Transverse colon (tissue), 4 donors: ENCODE measurements at regions of chr15 and their contacts with region 1.

Region 1: DNA sequence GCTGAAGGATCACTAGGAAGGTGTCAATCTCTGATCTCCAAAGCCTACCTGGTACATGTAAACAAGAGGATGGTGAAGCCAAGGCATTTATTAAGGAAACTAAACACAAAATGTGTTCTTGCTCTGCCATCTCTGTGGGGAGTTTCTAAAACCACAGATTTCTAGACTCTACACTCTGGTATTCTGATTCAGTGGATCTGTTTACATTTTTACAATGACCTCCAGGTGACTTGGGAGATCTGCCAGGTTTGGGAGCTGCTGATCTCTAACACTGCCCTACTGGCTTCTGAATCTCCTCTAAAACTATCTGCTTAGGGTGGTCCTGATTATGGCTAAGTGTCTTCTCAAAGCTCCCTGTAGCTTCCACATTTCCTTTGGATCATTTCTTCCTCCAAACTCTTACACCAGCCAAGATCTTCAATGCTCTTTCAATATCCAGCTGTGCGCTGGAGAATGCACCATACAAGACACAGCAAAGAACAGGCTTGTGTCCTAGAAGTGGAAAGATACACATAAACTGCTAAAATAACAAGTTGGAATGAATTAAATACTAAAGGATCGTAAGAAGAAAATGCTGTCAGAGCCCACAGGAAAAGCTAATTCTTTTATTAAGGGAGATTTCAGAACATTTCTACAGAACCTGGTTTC is 72.7 kb downstream of the GREM1 start:
- DNase-seq: no peak
- H3K4me3 ChIP-seq: no peak overlapping the region
- H3K27ac ChIP-seq: no peak overlapping the region
- H3K4me1 ChIP-seq: no peaks in the 10 kb centered on the region
- H3K27me3 ChIP-seq: no peaks in the 10 kb centered on the region
- CTCF ChIP-seq: no peak
- EP300 ChIP-seq: no peak
- POLR2A ChIP-seq: no peak

Region 2: GRCh38 chr15:32683906-32684584 is 106.4 kb before region 1 on chr15:
- in situ Hi-C with region 1: loop called in 1 of 4 experiments (anchors 25 kb)
- intact Hi-C with region 1: no loop called
- DNase-seq: no peak
- H3K4me3 ChIP-seq: no peak overlapping the region
- H3K27ac ChIP-seq: no peak overlapping the region
- H3K4me1 ChIP-seq: peaks cover 0 to 3% (median 0%) of the 10 kb centered on the region in 4 donors
- H3K27me3 ChIP-seq: no peaks in the 10 kb centered on the region
- CTCF ChIP-seq: no peak
- EP300 ChIP-seq: no peak
- POLR2A ChIP-seq: no peak

Region 3: DNA sequence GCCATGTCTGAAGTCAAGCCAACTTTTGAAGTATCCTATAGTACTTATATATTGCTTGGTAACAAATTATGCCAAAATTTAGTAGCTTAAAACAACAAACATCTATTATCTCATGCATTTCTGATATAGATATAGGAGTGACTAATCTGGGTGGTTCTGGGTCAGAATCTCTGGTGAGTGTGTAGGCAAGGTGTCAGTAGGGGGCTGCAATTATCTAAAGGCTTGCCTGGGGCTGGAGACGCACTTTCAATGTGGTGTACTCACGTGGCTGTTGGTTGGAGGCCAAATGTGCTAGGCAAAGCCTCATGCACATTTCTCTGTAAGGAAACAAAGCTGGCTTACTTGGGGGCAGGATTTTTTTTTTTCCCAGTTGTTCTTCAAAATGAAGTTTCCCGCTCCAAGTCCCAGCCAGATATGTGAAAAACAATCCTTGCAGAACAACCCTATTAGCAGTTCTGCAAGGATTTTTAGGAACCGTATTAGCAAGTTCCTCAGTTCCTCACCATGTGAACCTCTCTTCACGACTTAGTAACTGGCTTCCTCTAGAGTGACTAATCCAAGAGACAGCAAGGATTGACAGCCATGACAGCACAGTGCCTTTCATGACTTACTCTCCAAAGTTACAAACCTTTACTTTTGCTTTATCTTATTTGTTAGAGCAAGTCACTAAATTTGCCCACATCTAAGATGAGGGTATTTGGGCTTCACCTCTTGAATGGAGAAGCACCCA is 46.9 kb before region 1 on chr15:
- in situ Hi-C with region 1: no loop called
- intact Hi-C with region 1: loop called (anchors 2 kb)
- DNase-seq: no peak
- H3K4me3 ChIP-seq: no peak overlapping the region
- H3K27ac ChIP-seq: no peak overlapping the region
- H3K4me1 ChIP-seq: no peaks in the 10 kb centered on the region
- H3K27me3 ChIP-seq: no peaks in the 10 kb centered on the region
- CTCF ChIP-seq: no peak
- EP300 ChIP-seq: no peak
- POLR2A ChIP-seq: no peak